ENCODE measurements at regions of chr1 and their contacts with region 1.

Region 1: DNA sequence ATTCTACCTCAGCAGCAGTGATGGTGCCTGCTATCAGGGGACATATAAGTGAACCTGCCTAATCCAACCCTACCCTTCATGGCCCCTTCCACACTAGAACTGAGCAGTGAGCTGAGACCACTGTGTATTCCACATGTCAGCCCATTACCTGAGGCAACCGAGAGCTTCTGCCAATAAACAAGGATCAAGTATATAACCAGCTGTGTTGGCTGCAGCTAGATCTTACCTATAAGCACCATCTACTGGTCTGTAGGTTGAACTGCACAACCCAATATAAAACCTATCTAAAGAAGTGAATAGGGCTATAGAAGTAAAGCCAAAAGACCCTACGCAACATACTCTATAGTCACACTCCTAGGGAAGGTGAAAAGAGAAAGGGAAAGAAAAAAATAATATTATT is 376.9 kb downstream of the HHIPL2 start:
- DNase-seq: peak; percentile 51
- H3K4me3 ChIP-seq: no peak overlapping the region
- H3K27ac ChIP-seq: no peak overlapping the region
- H3K4me1 ChIP-seq: peaks cover 16% of the 10 kb centered on the region
- H3K27me3 ChIP-seq: no peaks in the 10 kb centered on the region
- CTCF ChIP-seq: peak; percentile 71 to 72

Region 2: GRCh38 chr1:221263831-221264767 is 906.9 kb before region 1 on chr1:
- CTCF ChIA-PET with region 1: interaction called, 3 read pairs
- dilution Hi-C with region 1: no loop called
- in situ Hi-C with region 1: no loop called
- intact Hi-C with region 1: loop called (anchors 2 kb)
- DNase-seq: peak; percentile 61
- H3K4me3 ChIP-seq: no peak overlapping the region
- H3K27ac ChIP-seq: no peak overlapping the region
- H3K4me1 ChIP-seq: no peaks in the 10 kb centered on the region
- H3K27me3 ChIP-seq: peaks cover 2% of the 10 kb centered on the region
- CTCF ChIP-seq: peak; percentile 66 to 75

Region 3: DNA sequence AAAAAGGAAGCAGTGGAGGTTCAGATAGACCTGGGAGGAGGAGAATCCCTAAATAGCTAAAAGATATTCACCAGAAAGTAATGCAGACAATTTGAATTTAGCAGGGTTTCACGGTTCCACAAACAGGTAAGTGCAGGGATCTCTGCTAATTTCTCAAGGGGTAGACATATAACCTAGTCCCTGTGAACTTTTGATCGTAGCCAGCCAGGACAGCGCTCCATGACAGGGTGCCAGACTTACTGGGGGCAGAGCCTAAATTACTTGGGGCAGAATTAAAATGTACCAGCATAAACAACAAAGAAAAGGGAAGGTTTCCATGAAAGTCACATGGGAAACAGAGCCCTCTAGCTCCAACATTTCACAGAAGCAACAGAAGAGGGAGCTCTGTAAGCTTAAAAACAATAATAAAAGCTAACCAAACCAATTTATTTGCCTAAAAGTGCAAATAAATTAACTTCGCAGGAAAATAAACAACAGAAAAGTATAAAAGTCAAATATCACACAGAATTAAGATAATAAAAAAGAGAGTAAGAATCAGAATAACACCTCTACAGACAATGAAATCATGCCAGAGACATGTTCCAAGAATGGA is 627.4 kb before region 1 on chr1:
- CTCF ChIA-PET with region 1: interaction called, 9 read pairs
- dilution Hi-C with region 1: no loop called
- in situ Hi-C with region 1: no loop called
- intact Hi-C with region 1: loop called (anchors 1 kb)
- DNase-seq: peak; percentile 25
- H3K4me3 ChIP-seq: no peak overlapping the region
- H3K27ac ChIP-seq: no peak overlapping the region
- H3K4me1 ChIP-seq: peaks cover 13% of the 10 kb centered on the region
- H3K27me3 ChIP-seq: no peaks in the 10 kb centered on the region
- CTCF ChIP-seq: peak; percentile 37 to 68

Region 4: GRCh38 chr1:221886743-221887413 is 284.1 kb before region 1 on chr1:
- CTCF ChIA-PET with region 1: no interaction called
- dilution Hi-C with region 1: no loop called
- in situ Hi-C with region 1: no loop called
- intact Hi-C with region 1: loop called (anchors 1 kb)
- DNase-seq: peak; percentile 100
- H3K4me3 ChIP-seq: no peak overlapping the region
- H3K27ac ChIP-seq: peak overlapping the region; percentile 93
- H3K4me1 ChIP-seq: peaks cover 46% of the 10 kb centered on the region
- H3K27me3 ChIP-seq: no peaks in the 10 kb centered on the region
- CTCF ChIP-seq: peak in 1 of 2 donors; percentile 49

Region 5: GRCh38 chr1:221994274-221994698 is 176.7 kb before region 1 on chr1:
- CTCF ChIA-PET with region 1: no interaction called
- dilution Hi-C with region 1: loop called (anchors 10 kb)
- in situ Hi-C with region 1: no loop called
- intact Hi-C with region 1: no loop called
- DNase-seq: peak; percentile 90
- H3K4me3 ChIP-seq: no peak overlapping the region
- H3K27ac ChIP-seq: peak overlapping the region; percentile 96
- H3K4me1 ChIP-seq: peaks cover 67% of the 10 kb centered on the region
- H3K27me3 ChIP-seq: no peaks in the 10 kb centered on the region
- CTCF ChIP-seq: no peak

Region 6: DNA sequence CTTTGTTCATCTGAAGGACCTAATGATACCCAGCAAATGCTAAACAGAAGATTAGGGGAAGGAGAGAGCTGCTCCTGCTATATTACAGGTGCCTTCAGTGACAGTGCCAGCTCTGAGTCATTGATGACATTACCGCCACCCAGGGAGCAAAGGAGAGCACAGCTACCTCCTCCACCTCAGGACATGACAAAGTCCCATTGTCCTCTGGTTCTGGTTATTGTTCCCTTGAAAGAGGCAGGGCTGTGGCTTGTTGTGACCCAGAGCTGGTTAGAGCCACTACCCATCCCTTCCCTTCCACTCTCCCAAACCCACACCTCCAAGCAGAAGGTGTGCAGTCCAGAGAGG is 65.6 kb before region 1 on chr1:
- CTCF ChIA-PET with region 1: no interaction called
- dilution Hi-C with region 1: no loop called
- in situ Hi-C with region 1: no loop called
- intact Hi-C with region 1: no loop called
- DNase-seq: peak; percentile 29
- H3K4me3 ChIP-seq: no peak overlapping the region
- H3K27ac ChIP-seq: no peak overlapping the region
- H3K4me1 ChIP-seq: no peaks in the 10 kb centered on the region
- H3K27me3 ChIP-seq: no peaks in the 10 kb centered on the region
- CTCF ChIP-seq: peak in 1 of 2 donors; percentile 17